Posterior vena cava (tissue), 2 donors: ENCODE measurements at regions of chr15 and their contacts with region 1.

Region 1: DNA sequence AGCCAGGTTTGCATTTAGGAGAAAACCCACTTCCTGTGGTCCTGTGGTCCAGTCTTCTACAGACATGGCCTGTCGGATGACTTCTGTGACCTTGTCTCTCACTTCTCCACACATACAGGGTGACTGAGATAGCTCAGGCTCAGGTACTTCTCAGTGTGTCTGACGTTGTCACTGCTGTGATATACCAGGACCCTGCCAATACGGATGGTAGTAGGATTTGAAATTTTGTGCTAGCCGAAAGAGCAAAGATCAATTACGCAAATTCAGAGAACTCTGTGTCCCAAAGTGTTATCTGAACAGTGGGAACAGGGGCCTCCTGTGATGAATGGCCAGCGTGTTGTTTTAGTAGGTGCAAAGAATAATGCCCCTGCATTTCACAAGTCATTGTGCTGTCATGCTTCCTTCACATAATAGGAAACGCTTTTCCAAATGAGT is 128.9 kb downstream of the MCTP2 start:
- DNase-seq: no peak

Region 2: GRCh38 chr15:94412979-94413746 is 52.9 kb after region 1 on chr15:
- intact Hi-C with region 1: no loop called
- DNase-seq: no peak

Region 3: GRCh38 chr15:94653071-94653470 is 292.8 kb after region 1 on chr15:
- intact Hi-C with region 1: loop called in 1 of 2 experiments (anchors 5 kb)
- DNase-seq: no peak